Esophagus squamous epithelium (tissue), 5 donors: ENCODE measurements at regions of chr5 and their contacts with region 1.

Region 1: GRCh38 chr5:132385326-132386105 is 16.0 kb downstream of the SLC22A5 start:
- DNase-seq: no peak
- H3K4me3 ChIP-seq: no peak overlapping the region
- H3K27ac ChIP-seq: peak overlapping the region; percentile 7 to 96 (median 50)
- H3K4me1 ChIP-seq: peaks cover 43 to 75% (median 57%) of the 10 kb centered on the region in 3 donors
- H3K27me3 ChIP-seq: no peaks in the 10 kb centered on the region
- CTCF ChIP-seq: peak; percentile 61 to 85 (median 72)
- POLR2A ChIP-seq: no peak

Region 2: GRCh38 chr5:132501961-132502931 is 116.7 kb after region 1 on chr5:
- intact Hi-C with region 1: loop called (anchors 2 kb)
- DNase-seq: no peak
- H3K4me3 ChIP-seq: no peak overlapping the region
- H3K27ac ChIP-seq: peak overlapping the region in 2 of 4 donors; percentile 13 to 30
- H3K4me1 ChIP-seq: peaks cover 14 to 58% (median 19%) of the 10 kb centered on the region in 3 donors
- H3K27me3 ChIP-seq: no peaks in the 10 kb centered on the region
- CTCF ChIP-seq: no peak
- POLR2A ChIP-seq: no peak

Region 3: DNA sequence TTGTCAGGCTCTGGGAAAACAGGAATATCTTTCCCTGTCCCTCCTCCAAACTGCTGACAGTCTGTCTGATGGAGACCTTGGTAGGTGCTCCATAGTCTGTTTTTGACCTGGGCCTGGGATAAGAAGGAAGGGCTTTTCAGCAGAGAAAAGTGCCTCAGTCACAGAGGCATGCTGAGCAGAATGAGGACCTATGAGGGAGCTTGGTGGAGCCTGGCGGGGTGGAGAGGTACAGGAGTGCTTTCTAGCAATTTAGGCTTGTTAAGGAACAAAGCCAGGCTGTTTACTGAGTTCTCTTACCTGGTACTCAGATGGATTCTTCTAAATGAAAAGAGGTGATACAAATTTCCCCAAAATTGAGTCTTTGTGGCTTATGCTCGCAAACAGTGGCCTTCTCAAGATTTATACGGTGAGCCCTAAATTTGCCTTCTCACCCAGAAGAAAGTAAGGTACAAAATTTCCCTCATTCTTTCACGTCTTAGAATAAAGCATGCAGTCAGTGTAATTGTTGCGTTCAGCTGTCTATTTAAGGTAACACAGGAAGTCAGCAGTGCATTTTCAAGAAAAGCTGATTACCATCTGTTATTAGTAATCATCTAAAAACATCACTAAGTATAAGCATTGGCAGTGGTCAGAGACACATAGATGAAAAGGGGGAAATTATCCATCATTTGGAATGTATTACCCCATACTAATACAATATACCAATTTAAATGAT is 243.9 kb after region 1 on chr5:
- intact Hi-C with region 1: no loop called
- DNase-seq: no peak
- H3K4me3 ChIP-seq: no peak overlapping the region
- H3K27ac ChIP-seq: no peak overlapping the region
- H3K4me1 ChIP-seq: no peaks in the 10 kb centered on the region
- H3K27me3 ChIP-seq: no peaks in the 10 kb centered on the region
- CTCF ChIP-seq: no peak
- POLR2A ChIP-seq: no peak